MCF 10A (cell line): ENCODE measurements at regions of chr13 and their contacts with region 1.

Region 1: DNA sequence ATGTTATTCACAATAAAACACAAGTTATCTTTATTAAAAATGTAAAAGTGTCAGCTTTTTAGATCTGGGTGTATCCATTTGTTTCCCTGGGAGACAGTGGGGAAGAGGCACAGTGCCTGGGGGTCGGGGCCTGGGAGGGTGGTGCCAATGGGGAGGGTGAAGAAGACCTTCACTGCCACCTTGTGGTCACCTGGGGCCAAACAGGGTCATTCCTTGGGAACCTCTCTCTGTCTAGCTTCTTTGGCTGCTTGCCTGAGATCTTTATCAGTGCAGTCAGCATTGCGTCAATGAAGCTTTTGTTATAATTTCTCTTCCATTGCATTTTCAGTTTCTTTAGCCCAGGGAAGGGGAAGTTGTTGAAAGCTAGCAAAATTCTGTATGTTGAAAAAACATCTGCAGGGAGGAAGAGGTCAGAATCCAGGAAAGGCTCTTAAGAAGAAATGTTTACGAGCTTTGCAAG is 39.1 kb downstream of the PCDH8 start:
- DNase-seq: peak; percentile 92
- H3K4me3 Mint-ChIP-seq: no peak overlapping the region
- H3K27ac Mint-ChIP-seq: no peak overlapping the region
- H3K4me1 Mint-ChIP-seq: peaks cover 8% of the 10 kb centered on the region
- H3K27me3 Mint-ChIP-seq: peaks cover 23% of the 10 kb centered on the region
- CTCF ChIP-seq: peak; percentile 67

Region 2: GRCh38 chr13:52617070-52618060 is 192.0 kb before region 1 on chr13:
- CTCF ChIA-PET with region 1: interaction called, 5 read pairs
- POLR2A ChIA-PET with region 1: no interaction called
- intact Hi-C with region 1: loop called (anchors 5 kb)
- DNase-seq: peak; percentile 85
- H3K4me3 Mint-ChIP-seq: peak overlapping the region; percentile 98
- H3K27ac Mint-ChIP-seq: peak overlapping the region; percentile 88
- H3K4me1 Mint-ChIP-seq: peaks cover 11% of the 10 kb centered on the region
- H3K27me3 Mint-ChIP-seq: no peaks in the 10 kb centered on the region
- CTCF ChIP-seq: no peak

Region 3: GRCh38 chr13:52659340-52659739 is 150.0 kb before region 1 on chr13:
- CTCF ChIA-PET with region 1: interaction called, 27 read pairs
- POLR2A ChIA-PET with region 1: no interaction called
- intact Hi-C with region 1: no loop called
- DNase-seq: no peak
- H3K4me3 Mint-ChIP-seq: no peak overlapping the region
- H3K27ac Mint-ChIP-seq: no peak overlapping the region
- H3K4me1 Mint-ChIP-seq: no peaks in the 10 kb centered on the region
- H3K27me3 Mint-ChIP-seq: no peaks in the 10 kb centered on the region
- CTCF ChIP-seq: no peak

Region 4: DNA sequence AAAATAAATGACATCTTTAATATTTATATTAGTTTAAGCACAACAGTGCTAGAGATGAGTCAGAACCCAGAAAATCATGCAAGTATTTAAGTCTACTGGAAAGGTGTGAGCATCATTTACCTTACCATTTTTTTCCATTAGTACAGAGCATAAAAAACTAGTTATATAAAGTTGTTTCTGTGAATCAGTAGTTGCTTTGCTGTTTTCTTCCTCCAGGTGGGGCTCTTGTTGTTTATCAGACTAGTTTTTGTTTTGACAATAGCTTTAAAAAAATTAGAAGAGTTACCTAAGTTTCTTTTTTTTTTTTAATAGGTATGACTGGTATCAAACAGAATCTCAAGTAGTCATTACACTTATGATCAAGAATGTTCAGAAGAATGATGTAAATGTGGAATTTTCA is 144.0 kb before region 1 on chr13:
- CTCF ChIA-PET with region 1: interaction called, 27 read pairs
- POLR2A ChIA-PET with region 1: interaction called, 5 read pairs
- intact Hi-C with region 1: loop called (anchors 1 kb)
- DNase-seq: peak; percentile 30
- H3K4me3 Mint-ChIP-seq: no peak overlapping the region
- H3K27ac Mint-ChIP-seq: no peak overlapping the region
- H3K4me1 Mint-ChIP-seq: peaks cover 6% of the 10 kb centered on the region
- H3K27me3 Mint-ChIP-seq: no peaks in the 10 kb centered on the region
- CTCF ChIP-seq: peak; percentile 42

Region 5: DNA sequence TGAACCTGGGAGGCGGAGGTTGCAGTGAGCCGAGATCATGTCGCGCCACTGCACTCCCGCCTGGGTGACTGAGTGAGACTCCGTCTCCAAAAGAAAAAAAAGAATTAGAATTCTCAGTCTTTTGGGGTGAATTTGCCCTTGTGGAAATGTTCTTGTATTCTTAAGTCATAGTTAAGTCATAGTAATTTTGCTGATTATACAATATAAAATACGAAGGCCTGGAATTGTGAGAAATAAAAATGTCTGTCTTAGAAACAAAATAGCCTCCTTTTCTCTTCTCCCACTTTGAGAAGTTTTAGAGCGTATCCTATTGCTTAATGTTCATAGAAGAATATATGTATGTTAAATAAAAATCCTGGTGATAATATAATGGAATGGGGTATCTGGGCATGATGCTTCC is 138.6 kb before region 1 on chr13:
- CTCF ChIA-PET with region 1: interaction called, 27 read pairs
- POLR2A ChIA-PET with region 1: interaction called, 5 read pairs
- intact Hi-C with region 1: loop called (anchors 1 kb)
- DNase-seq: no peak
- H3K4me3 Mint-ChIP-seq: no peak overlapping the region
- H3K27ac Mint-ChIP-seq: peak overlapping the region; percentile 27
- H3K4me1 Mint-ChIP-seq: peaks cover 6% of the 10 kb centered on the region
- H3K27me3 Mint-ChIP-seq: no peaks in the 10 kb centered on the region
- CTCF ChIP-seq: no peak

Region 6: DNA sequence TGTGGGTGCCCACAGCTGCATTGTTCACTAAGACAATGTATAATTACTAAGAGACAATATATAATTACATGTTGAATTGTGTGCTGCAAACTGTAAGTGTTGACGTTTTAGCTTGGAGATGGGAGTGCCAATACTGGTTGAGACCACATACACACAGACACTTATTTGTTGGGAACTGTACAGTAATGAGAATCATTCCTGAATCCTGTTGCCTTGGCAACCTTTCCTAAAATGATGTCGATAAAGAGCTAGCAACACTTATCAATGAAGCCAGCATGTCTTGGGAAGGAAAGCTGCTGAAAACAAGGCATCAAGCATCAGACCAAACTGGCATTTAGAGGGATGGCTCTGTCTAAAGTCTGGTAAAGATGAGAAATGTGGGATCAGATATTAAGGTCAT is 12.2 kb before region 1 on chr13:
- CTCF ChIA-PET with region 1: interaction called, 25 read pairs
- POLR2A ChIA-PET with region 1: no interaction called
- intact Hi-C with region 1: no loop called
- DNase-seq: no peak
- H3K4me3 Mint-ChIP-seq: no peak overlapping the region
- H3K27ac Mint-ChIP-seq: no peak overlapping the region
- H3K4me1 Mint-ChIP-seq: no peaks in the 10 kb centered on the region
- H3K27me3 Mint-ChIP-seq: peaks cover 50% of the 10 kb centered on the region
- CTCF ChIP-seq: no peak

Region 7: DNA sequence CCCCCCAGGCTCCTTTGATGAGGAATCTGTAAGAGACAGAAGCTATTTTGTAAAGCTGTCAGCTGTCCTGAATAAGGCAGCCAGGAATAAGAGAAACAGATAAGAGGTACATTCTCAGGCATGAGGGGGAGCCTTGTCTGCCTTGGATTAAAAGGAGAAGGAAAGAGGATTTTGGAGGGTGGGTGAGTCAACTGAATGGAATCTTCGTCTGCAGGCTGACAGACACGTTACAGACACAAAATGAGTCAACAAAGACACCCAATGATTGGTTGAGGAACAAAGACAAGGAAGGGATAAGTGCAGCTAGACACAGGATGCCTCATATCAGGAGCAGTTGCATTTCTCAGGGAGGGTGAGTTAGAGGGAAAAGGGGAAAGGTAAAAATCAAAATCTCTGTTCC is 381.8 kb after region 1 on chr13:
- CTCF ChIA-PET with region 1: interaction called, 3 read pairs
- POLR2A ChIA-PET with region 1: no interaction called
- intact Hi-C with region 1: loop called (anchors 1 kb)
- DNase-seq: peak; percentile 83
- H3K4me3 Mint-ChIP-seq: no peak overlapping the region
- H3K27ac Mint-ChIP-seq: no peak overlapping the region
- H3K4me1 Mint-ChIP-seq: peaks cover 13% of the 10 kb centered on the region
- H3K27me3 Mint-ChIP-seq: no peaks in the 10 kb centered on the region
- CTCF ChIP-seq: no peak